ENCODE measurements at regions of chr17 and their contacts with region 1.

Region 1: GRCh38 chr17:39461113-39461925 is at the start of gene CDK12:
- DNase-seq: peak; percentile 91 to 96
- ATAC-seq: peak; percentile 93 to 96 (median 94)
- H3K4me3 ChIP-seq: peak within 1 kb of the TSS; percentile 98
- H3K27ac ChIP-seq: peak within 1 kb of the TSS; percentile 98
- H3K4me1 ChIP-seq: peaks cover 18% of the 10 kb centered on the region
- H3K27me3 ChIP-seq: no peaks in the 10 kb centered on the region
- CTCF ChIP-seq: no peak
- total RNA-seq, gene CDK12: 17.8 to 25.3 (median 21.7) TPM

Region 2: DNA sequence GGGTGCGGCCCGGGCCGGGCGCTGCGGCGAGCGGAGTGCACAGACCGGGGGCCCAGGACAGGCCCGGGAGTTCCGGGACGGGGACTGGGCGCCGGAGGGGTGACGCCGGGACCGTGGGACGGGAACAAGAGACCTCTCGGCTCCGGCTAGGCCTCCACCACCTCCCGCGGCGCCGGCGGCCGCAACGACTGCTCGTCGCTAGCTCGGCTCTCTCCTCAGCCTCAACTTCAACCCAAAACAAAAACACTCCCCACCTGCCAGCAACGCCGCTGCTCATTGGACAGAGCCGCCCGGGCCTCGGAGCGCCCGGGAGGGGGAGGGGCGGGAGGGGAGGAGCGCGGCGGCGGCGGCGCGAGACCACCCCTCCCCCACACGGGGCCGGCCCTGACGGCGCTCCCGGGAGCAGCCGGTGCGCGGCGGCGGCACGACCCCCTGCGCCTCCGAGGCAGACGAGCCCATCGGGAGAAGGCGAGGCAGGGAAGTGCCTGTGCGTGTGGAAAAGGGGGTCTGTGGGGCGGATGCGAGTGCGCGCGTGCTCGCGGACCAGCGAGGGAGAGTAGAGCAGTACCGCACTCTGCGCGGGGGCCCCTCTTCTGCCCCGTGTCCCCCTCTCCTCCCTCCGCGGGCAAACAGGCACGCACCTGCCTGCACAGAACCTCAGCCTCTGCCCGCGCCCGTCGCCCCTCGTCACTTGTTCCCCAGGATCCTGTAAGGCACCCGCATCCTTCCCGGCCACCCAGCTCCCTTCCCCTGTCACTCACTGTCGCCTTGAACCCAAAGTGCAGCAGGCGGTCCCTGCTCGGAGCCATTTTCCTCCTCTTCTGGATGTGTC is 59.7 kb before region 1 on chr17 and contains the start of gene FBXL20:
- intact Hi-C with region 1: loop called in 1 of 2 experiments (anchors 5 kb)
- DNase-seq: peak; percentile 95 to 97
- ATAC-seq: peak; percentile 93 to 95 (median 94)
- H3K4me3 ChIP-seq: peak within 1 kb of the TSS; percentile 81
- H3K27ac ChIP-seq: peak within 1 kb of the TSS; percentile 84
- H3K4me1 ChIP-seq: peaks cover 24% of the 10 kb centered on the region
- H3K27me3 ChIP-seq: no peaks in the 10 kb centered on the region
- CTCF ChIP-seq: no peak
- total RNA-seq, gene FBXL20: 8.0 to 8.7 (median 8.2) TPM

Region 3: GRCh38 chr17:39450847-39451581 is 10.3 kb before region 1 on chr17 and contains the start of gene MED1:
- intact Hi-C with region 1: loop called in 1 of 2 experiments (anchors 1 kb)
- DNase-seq: peak; percentile 91 to 96
- ATAC-seq: peak; percentile 98 to 100 (median 99)
- H3K4me3 ChIP-seq: peak within 1 kb of the TSS; percentile 82
- H3K27ac ChIP-seq: peak within 1 kb of the TSS; percentile 83
- H3K4me1 ChIP-seq: peaks cover 2% of the 10 kb centered on the region
- H3K27me3 ChIP-seq: no peaks in the 10 kb centered on the region
- CTCF ChIP-seq: no peak
- total RNA-seq, gene MED1: 18.2 to 28.5 (median 25.9) TPM

Region 4: GRCh38 chr17:39538866-39539265 is 77.5 kb after region 1 on chr17:
- intact Hi-C with region 1: no loop called
- DNase-seq: no peak
- ATAC-seq: no peak
- H3K4me3 ChIP-seq: no peak overlapping the region
- H3K27ac ChIP-seq: no peak overlapping the region
- H3K4me1 ChIP-seq: no peaks in the 10 kb centered on the region
- H3K27me3 ChIP-seq: no peaks in the 10 kb centered on the region
- CTCF ChIP-seq: no peak

Measured in psoas muscle (tissue), 8 donors.